HepG2 (cell line): ENCODE measurements at regions of chr16 and their contacts with region 1.

Region 1: DNA sequence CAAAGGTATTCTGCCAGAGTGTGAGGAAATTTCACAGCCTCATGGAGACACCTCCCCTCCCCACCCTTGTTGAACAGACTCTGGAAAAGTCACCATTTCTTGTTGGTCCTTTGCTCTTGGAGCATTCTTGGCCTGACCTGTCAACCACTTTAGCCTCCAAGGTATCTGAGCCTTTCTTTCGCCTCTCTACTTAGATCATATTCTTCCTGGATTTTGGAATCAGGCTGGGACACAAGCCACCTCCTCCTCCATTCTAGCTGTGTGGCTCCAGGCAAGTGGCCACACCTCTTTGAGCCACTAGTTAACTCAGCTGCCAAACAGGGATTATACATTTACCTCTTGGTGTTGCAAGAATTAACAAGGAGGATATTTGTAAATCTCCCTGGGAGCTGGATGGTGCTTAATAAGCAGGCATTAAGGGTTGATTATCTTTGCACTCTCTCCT is 193.5 kb downstream of the WWOX start:
- DNase-seq: peak; percentile 63
- ATAC-seq: peak; percentile 87
- H3K4me3 ChIP-seq: peak overlapping the region in 2 of 3 experiments; percentile 3 to 31; a peak in 1 of 6 replicates
- H3K27ac ChIP-seq: peak overlapping the region; percentile 78
- H3K4me1 ChIP-seq: peaks cover 82% of the 10 kb centered on the region
- H3K27me3 ChIP-seq: no peaks in the 10 kb centered on the region
- CTCF ChIP-seq: no peak
- EP300 ChIP-seq: peak in 1 of 2 experiments; percentile 53; a peak in 1 of 4 replicates
- POLR2A ChIP-seq: 0 out of 4 replicates have a peak, but pooled peaks of 1 of the 2 experiments have one; percentile 42
- RAD21 ChIP-seq: no peak

Region 2: GRCh38 chr16:78216166-78216740 is 76.7 kb before region 1 on chr16:
- CTCF ChIA-PET with region 1: no interaction called
- POLR2A ChIA-PET with region 1: no interaction called
- in situ Hi-C with region 1: no loop called
- intact Hi-C with region 1: no loop called
- DNase-seq: no peak
- ATAC-seq: no peak
- H3K4me3 ChIP-seq: no peak overlapping the region
- H3K27ac ChIP-seq: no peak overlapping the region
- H3K4me1 ChIP-seq: 0 out of 2 replicates have a peak, but pooled peaks cover 7% of the 10 kb centered on the region
- H3K27me3 ChIP-seq: no peaks in the 10 kb centered on the region
- CTCF ChIP-seq: no peak
- EP300 ChIP-seq: no peak
- POLR2A ChIP-seq: no peak
- RAD21 ChIP-seq: no peak

Region 3: DNA sequence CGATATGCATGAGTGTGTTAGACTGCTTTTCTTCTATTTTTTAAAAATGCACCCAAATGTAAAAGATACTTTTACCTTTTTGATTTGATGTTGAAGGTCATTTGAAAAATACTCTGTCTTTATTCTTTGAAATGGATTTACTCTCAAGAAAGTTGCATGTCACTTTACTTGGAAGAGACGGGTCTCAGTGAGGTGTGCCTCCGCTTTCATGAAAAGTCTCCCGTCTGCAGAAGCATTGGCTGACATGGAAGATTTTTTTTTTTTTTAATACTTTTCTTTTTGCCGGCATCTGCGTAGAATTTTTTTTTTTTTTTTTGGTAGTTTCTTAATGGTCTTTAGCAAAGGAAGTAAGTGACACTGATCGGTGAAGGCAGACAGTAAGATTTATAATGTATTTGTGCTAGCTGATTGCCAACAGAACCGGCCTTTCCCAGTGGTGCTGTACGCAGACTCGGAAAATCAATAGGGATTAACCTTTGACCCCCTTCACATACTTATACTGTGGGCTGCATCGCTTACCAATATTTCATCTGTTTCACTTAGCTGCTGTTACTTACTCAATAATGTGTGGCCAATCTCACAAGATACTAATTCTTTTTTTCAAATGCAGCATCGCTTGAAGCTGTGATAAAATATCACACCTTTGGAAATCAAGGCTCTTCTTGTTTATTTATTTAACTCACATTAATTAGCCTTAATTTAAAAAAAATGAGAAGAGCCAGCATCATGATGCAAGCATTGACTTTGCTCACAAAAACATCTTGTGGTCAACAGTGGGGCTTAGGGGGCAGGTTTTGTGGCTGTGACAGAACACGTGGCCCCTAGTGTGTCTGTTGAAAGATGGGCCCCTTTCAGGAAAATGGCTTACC is 190.4 kb after region 1 on chr16:
- CTCF ChIA-PET with region 1: no interaction called
- POLR2A ChIA-PET with region 1: interaction called, 8 read pairs
- in situ Hi-C with region 1: no loop called
- intact Hi-C with region 1: loop called (anchors 5 kb)
- DNase-seq: peak; percentile 93
- ATAC-seq: peak; percentile 72
- H3K4me3 ChIP-seq: no peak overlapping the region
- H3K27ac ChIP-seq: peak overlapping the region; percentile 90
- H3K4me1 ChIP-seq: peaks cover 89% of the 10 kb centered on the region
- H3K27me3 ChIP-seq: no peaks in the 10 kb centered on the region
- CTCF ChIP-seq: no peak
- EP300 ChIP-seq: peak; percentile 37 to 92; a peak in 3 of 4 replicates
- POLR2A ChIP-seq: no peak
- RAD21 ChIP-seq: no peak